ENCODE measurements at regions of chr14 and their contacts with region 1.

Region 1: GRCh38 chr14:20413045-20413799 is at the start of gene TEP1:
- DNase-seq: peak; percentile 73
- ATAC-seq: peak; percentile 79
- H3K4me3 Mint-ChIP-seq: peak within 1 kb of the TSS; percentile 99
- H3K27ac Mint-ChIP-seq: peak within 1 kb of the TSS; percentile 99
- H3K4me1 Mint-ChIP-seq: peaks cover 49% of the 10 kb centered on the region
- H3K27me3 Mint-ChIP-seq: no peaks in the 10 kb centered on the region
- CTCF ChIP-seq: no peak
- total RNA-seq, gene TEP1: 99.0 and 120 TPM in 2 replicates

Region 2: DNA sequence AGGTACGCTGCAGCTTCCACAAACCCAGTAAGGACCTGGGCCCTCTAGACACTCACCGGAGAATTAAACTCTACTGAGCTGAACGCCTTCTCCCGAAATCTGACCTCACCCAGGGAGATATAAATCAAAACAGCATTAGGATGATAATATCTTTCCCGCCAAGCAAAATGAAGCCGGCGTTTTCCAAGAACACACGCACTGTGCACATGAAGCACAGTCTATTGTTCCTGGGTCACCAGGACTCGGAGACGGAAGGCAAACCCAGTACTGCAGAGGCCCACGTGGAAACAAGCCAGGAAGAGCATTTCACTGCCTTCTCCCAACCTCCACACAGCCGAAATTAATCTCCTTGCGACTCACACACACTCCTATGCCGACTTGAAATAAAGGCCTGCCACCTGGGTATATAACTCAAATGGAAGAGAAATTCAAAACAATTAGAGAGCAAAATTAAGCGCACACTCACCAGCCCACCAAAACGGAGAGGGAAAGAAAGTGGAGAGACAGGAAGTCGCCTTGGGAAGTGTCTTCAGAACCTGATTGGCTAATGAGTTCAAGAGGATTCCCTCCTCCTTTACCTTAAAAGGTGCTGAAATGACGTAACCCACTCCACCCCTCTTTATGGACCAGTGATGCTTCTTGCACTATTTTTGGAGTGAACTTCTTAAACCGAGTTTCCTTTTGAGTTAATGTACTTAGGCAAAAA is 80.3 kb before region 1 on chr14 and contains the start of gene CCNB1IP1:
- CTCF ChIA-PET with region 1: interaction called, 9 read pairs
- POLR2A ChIA-PET with region 1: no interaction called
- intact Hi-C with region 1: loop called (anchors 2 kb)
- DNase-seq: no peak
- ATAC-seq: peak; percentile 97
- H3K4me3 Mint-ChIP-seq: peak within 1 kb of the TSS; percentile 99
- H3K27ac Mint-ChIP-seq: peak within 1 kb of the TSS; percentile 89
- H3K4me1 Mint-ChIP-seq: peaks cover 29% of the 10 kb centered on the region
- H3K27me3 Mint-ChIP-seq: no peaks in the 10 kb centered on the region
- CTCF ChIP-seq: no peak
- total RNA-seq, gene CCNB1IP1: 34.0 and 35.3 TPM in 2 replicates

Region 3: DNA sequence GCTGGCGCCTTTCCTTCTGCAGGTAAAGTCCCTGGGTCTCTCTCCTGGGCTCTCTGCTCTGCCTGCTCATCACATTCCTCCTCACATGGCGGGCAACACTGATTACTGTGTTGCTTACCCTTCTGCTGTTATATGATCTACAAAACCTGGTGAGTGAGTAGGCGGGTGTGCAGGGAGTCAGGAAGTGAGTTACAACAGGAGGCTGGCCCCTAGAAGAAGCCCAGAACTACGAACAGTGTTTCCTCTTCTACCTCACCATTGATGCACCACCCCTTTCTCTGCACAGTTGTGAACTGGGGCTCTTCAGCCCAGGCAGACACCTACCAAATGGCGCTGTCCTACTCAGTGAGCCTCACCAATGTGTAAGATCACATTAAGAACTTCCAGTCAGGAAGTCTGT is 27.7 kb after region 1 on chr14:
- CTCF ChIA-PET with region 1: interaction called, 5 read pairs
- POLR2A ChIA-PET with region 1: no interaction called
- intact Hi-C with region 1: loop called (anchors 2 kb)
- DNase-seq: no peak
- ATAC-seq: peak; percentile 71
- H3K4me3 Mint-ChIP-seq: peak overlapping the region; percentile 28
- H3K27ac Mint-ChIP-seq: peak overlapping the region; percentile 70
- H3K4me1 Mint-ChIP-seq: peaks cover 52% of the 10 kb centered on the region
- H3K27me3 Mint-ChIP-seq: no peaks in the 10 kb centered on the region
- CTCF ChIP-seq: no peak

Region 4: GRCh38 chr14:20469242-20469889 is 56.1 kb after region 1 on chr14 and contains the start of gene PNP:
- CTCF ChIA-PET with region 1: interaction called, 14 read pairs
- POLR2A ChIA-PET with region 1: interaction called, 17 read pairs
- intact Hi-C with region 1: loop called (anchors 1 kb)
- DNase-seq: peak; percentile 78
- ATAC-seq: peak; percentile 89
- H3K4me3 Mint-ChIP-seq: peak within 1 kb of the TSS; percentile 95
- H3K27ac Mint-ChIP-seq: peak within 1 kb of the TSS; percentile 93
- H3K4me1 Mint-ChIP-seq: peaks cover 42% of the 10 kb centered on the region
- H3K27me3 Mint-ChIP-seq: no peaks in the 10 kb centered on the region
- CTCF ChIP-seq: no peak
- total RNA-seq, gene PNP: 87.2 and 88.0 TPM in 2 replicates

Region 5: DNA sequence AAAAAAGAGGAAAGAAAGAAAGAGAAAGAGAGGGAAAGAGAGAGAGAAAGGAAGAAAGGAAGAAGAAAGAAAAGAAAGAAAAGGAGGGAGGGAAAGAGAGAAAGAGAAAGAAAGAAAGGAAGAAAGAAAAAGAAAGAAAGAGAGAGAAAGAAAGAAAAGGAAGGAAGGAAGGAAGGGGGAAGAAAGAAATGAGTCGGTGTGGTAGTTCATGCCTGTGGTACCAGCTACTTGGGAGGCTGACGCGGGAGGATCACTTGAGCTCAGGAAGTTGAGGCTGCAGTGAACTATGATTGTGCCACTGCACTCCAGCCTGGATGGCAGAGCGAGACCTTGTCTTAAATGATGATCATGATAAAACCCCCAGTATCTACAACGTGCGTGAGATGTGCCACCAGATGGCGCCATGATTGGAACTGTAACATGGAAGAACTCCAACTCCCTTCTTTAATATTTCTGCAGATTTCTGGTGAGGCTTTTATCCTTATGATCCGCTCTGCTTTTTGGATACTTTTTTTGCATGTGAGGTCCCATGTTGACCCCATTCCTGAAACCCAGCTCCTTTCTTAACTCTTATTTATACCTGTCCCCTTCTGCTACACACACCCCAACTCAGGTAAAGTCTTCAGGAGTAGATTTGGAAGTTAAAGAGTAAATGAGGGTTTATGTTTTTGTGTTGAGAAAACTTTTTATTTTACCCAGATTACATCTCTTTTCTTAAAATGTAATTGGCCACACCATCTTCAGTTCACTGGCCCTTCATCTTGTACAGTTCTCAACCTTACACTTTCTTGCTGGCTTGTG is 117.7 kb after region 1 on chr14:
- CTCF ChIA-PET with region 1: interaction called, 8 read pairs
- POLR2A ChIA-PET with region 1: no interaction called
- intact Hi-C with region 1: loop called (anchors 1 kb)
- DNase-seq: peak; percentile 39
- ATAC-seq: peak; percentile 76
- H3K4me3 Mint-ChIP-seq: peak overlapping the region; percentile 48
- H3K27ac Mint-ChIP-seq: no peak overlapping the region
- H3K4me1 Mint-ChIP-seq: peaks cover 8% of the 10 kb centered on the region
- H3K27me3 Mint-ChIP-seq: peaks cover 8% of the 10 kb centered on the region
- CTCF ChIP-seq: no peak

Region 6: DNA sequence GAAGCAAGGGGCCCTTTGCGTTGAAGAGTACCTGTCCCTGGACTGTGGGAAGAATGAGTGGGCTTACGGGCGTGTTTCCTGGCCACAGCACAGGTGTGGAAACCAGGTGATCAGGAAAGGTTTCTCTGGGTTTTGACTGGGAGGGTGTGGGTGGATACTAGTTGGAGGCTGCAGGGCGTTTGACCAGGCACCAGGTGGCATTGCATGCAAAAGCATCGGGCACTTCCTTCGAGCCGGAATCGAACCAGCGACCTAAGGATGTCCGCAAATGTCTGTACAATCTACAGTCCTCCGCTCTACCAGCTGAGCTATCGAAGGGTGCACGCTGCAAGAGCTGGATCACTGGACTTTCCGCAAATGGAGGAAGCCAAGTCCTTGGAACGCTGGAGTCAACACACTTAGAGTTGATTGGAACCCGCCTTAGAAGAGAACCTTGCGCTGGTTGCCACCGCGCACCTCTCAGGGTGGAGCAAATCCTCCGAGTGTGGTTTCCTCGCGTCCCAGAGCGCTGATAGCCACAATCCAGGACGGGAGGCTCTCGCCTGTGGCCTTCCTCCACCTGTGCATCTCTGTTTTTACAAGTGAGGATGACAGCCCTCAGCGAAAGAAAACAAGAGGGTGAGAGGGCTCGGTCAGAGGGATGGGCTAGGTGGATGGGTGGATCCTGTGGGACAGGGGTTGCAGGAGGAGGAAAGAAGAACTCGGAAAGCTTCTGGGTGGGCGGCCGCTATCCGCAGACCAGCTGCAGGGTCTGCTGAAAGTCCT is 249.9 kb after region 1 on chr14:
- CTCF ChIA-PET with region 1: no interaction called
- POLR2A ChIA-PET with region 1: no interaction called
- intact Hi-C with region 1: no loop called
- DNase-seq: peak; percentile 67
- ATAC-seq: peak; percentile 85
- H3K4me3 Mint-ChIP-seq: peak overlapping the region; percentile 87
- H3K27ac Mint-ChIP-seq: peak overlapping the region; percentile 67
- H3K4me1 Mint-ChIP-seq: peaks cover 53% of the 10 kb centered on the region
- H3K27me3 Mint-ChIP-seq: no peaks in the 10 kb centered on the region
- CTCF ChIP-seq: no peak

Region 7: GRCh38 chr14:20682435-20683124 is 269.4 kb after region 1 on chr14:
- CTCF ChIA-PET with region 1: interaction called, 7 read pairs
- POLR2A ChIA-PET with region 1: interaction called, 8 read pairs
- intact Hi-C with region 1: loop called (anchors 1 kb)
- DNase-seq: peak; percentile 70
- ATAC-seq: peak; percentile 59
- H3K4me3 Mint-ChIP-seq: no peak overlapping the region
- H3K27ac Mint-ChIP-seq: no peak overlapping the region
- H3K4me1 Mint-ChIP-seq: peaks cover 16% of the 10 kb centered on the region
- H3K27me3 Mint-ChIP-seq: no peaks in the 10 kb centered on the region
- CTCF ChIP-seq: no peak